IMR-90 (cell line): ENCODE measurements at regions of chr1 and their contacts with region 1.

Region 1: GRCh38 chr1:8727809-8728213 is 89.6 kb downstream of the RERE start:
- DNase-seq: no peak
- ATAC-seq: no peak
- H3K4me3 ChIP-seq: no peak overlapping the region
- H3K27ac ChIP-seq: no peak overlapping the region
- H3K4me1 ChIP-seq: peaks cover 2% of the 10 kb centered on the region
- H3K27me3 ChIP-seq: no peaks in the 10 kb centered on the region
- CTCF ChIP-seq: no peak
- POLR2A ChIP-seq: no peak
- RAD21 ChIP-seq: no peak

Region 2: GRCh38 chr1:8560611-8561544 is 166.9 kb before region 1 on chr1:
- CTCF ChIA-PET with region 1: interaction called, 6 read pairs
- POLR2A ChIA-PET with region 1: no interaction called
- dilution Hi-C with region 1: no loop called
- in situ Hi-C with region 1: loop called (anchors 5 kb)
- intact Hi-C with region 1: loop called (anchors 1 kb)
- DNase-seq: peak; percentile 60
- ATAC-seq: peak; percentile 85
- H3K4me3 ChIP-seq: no peak overlapping the region
- H3K27ac ChIP-seq: no peak overlapping the region
- H3K4me1 ChIP-seq: peaks cover 7% of the 10 kb centered on the region
- H3K27me3 ChIP-seq: no peaks in the 10 kb centered on the region
- CTCF ChIP-seq: peak; percentile 84
- POLR2A ChIP-seq: no peak
- RAD21 ChIP-seq: peak; percentile 89

Region 3: DNA sequence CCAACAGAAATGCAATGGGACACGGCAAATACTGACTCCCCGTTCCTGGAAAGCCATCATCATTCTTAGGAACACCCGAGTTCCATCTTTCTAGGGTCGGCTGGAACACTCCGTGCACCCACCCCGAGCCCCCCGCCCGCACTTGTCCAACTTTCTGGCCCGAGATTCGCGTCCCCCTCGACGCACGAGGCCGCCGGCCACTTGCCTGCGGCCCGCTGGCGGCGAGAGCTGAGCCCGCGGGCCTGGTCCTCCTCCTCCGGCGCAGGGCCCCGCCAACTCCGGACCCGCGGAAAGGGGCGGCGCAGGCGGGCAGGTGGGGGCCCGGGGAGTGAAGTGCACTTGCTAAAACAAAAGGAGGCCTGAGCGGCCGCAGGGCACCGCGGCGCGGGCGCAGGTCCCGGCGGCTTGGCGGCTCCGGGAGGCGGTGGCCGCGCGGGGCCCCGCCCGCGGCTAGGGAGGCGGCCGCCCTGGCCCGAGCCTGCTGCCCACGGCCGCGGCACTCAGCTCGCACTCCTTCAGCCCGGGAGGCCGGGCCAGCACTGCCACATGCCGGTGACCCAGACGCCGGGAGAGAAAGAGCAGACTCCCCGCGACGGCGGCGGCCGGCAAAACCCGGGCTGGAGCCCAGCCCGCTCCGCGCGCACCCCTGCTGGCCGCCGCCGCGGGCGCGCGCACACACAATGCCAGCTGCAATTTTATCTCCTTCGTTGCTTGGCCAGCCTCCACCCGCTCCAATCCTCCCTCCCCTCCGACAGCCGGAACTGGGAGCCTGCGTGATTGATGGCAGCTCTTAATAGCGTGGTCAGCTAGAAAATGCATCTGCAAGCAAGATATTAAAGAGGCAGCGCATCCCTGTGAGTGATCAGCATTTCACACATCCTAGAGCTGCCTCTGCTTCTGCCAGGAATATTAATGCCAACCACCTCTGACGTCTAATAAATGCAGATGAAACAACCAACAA is 24.7 kb before region 1 on chr1:
- CTCF ChIA-PET with region 1: interaction called, 14 read pairs
- POLR2A ChIA-PET with region 1: no interaction called
- dilution Hi-C with region 1: no loop called
- in situ Hi-C with region 1: no loop called
- intact Hi-C with region 1: no loop called
- DNase-seq: peak; percentile 89
- ATAC-seq: peak; percentile 84
- H3K4me3 ChIP-seq: peak overlapping the region; percentile 93
- H3K27ac ChIP-seq: peak overlapping the region; percentile 94
- H3K4me1 ChIP-seq: peaks cover 10% of the 10 kb centered on the region
- H3K27me3 ChIP-seq: no peaks in the 10 kb centered on the region
- CTCF ChIP-seq: peak; percentile 35
- POLR2A ChIP-seq: peak; percentile 91
- RAD21 ChIP-seq: peak; percentile 39

Region 4: DNA sequence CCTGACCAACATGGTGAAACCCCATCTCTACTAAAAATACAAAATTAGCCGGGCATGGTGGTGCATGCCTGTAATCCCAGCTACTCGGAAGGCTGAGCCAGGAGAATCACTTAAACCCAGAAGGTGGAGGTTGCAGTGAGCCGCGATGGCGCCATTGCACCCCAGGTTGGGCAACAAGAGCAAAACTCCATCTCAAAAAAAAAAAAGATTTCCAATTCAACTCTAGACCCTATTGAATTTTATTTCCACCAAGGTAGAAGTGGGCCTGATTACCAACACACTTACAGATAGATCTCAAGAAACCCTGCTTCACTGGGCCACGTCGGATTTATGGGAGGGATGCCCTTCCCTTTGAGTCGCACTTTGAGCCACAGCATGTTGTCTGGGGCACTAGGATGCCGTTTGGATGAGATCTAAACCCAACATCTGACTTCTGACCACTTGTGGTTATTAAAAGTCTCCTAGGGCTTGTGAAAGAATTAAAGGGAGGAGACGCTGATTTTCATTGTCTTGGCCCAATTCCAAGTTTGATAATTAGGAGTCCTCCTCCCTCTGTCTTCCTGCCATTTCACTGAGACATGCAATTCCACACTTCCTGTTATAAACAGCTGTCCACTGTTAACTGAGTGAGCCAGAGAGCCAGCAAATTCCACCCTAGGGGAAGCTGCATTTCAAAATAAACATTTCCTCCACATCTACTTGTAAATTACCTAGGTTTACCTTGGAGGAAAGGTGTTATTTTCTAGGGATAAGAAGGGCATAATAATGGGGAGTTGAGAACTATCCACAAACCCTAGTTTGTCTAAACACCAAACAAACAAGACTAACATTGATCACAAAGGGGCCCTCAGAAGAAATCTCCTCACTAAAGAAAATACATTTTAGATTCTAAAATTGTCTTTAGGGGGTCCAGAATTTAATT is 94.8 kb after region 1 on chr1:
- CTCF ChIA-PET with region 1: no interaction called
- POLR2A ChIA-PET with region 1: no interaction called
- dilution Hi-C with region 1: no loop called
- in situ Hi-C with region 1: no loop called
- intact Hi-C with region 1: no loop called
- DNase-seq: peak; percentile 89
- ATAC-seq: peak; percentile 71
- H3K4me3 ChIP-seq: no peak overlapping the region
- H3K27ac ChIP-seq: no peak overlapping the region; the same call in 1 of the 2 replicates
- H3K4me1 ChIP-seq: peaks cover 8% of the 10 kb centered on the region
- H3K27me3 ChIP-seq: no peaks in the 10 kb centered on the region
- CTCF ChIP-seq: no peak
- POLR2A ChIP-seq: no peak
- RAD21 ChIP-seq: no peak

Region 5: DNA sequence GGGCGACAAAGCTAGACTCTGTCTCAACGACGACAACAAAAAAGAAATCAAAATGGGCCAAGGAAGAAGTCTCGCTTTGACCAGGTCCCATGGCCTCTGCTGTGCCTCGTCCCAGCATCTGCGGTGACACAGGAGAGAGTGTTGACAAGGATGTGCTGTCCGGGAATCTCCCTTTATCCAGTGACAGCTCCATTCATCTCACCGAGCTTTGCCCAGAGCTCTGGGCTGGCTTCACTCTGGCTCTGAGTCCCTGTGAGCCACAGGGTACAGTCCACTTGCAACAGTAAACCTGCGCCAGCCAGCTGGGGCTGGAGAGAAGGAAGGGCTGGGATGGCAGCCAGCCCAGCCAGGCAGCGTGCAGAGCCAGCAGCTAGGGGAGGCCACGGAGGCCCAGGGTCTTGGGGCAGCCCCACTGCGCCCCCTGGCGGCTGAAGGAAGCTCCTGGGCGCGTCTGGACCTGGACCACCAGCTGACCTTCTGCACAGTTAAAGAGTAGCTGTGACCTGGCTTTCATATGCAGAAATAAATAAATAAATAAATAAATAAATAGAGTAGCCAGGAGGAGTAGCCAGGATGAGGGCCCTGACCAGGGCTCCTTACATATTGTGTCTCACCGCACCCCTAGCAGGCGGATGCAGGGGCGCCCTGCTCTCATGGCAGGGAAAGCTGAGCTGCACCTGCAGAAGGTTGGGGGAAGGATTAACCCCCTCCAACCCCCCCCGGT is 121.0 kb after region 1 on chr1:
- CTCF ChIA-PET with region 1: interaction called, 14 read pairs
- POLR2A ChIA-PET with region 1: no interaction called
- dilution Hi-C with region 1: no loop called
- in situ Hi-C with region 1: no loop called
- intact Hi-C with region 1: loop called (anchors 2 kb)
- DNase-seq: peak; percentile 93
- ATAC-seq: peak; percentile 97
- H3K4me3 ChIP-seq: no peak overlapping the region
- H3K27ac ChIP-seq: no peak overlapping the region
- H3K4me1 ChIP-seq: peaks cover 2% of the 10 kb centered on the region
- H3K27me3 ChIP-seq: peaks cover 10% of the 10 kb centered on the region
- CTCF ChIP-seq: peak; percentile 95
- POLR2A ChIP-seq: 0 out of 2 replicates have a peak, but pooled peaks have one; percentile 33
- RAD21 ChIP-seq: peak; percentile 92